ENCODE measurements at regions of chr11 and their contacts with region 1.

Region 1: GRCh38 chr11:123122341-123122740 is 60.4 kb upstream of the HSPA8 start:
- DNase-seq: no peak
- ATAC-seq: no peak
- H3K4me3 ChIP-seq: no peak overlapping the region
- H3K27ac ChIP-seq: no peak overlapping the region
- H3K4me1 ChIP-seq: peaks cover 15% of the 10 kb centered on the region
- H3K27me3 ChIP-seq: no peaks in the 10 kb centered on the region
- CTCF ChIP-seq: no peak

Region 2: GRCh38 chr11:122853971-122854446 is 268.3 kb before region 1 on chr11:
- CTCF ChIA-PET with region 1: no interaction called
- POLR2A ChIA-PET with region 1: no interaction called
- intact Hi-C with region 1: no loop called
- DNase-seq: peak; percentile 96
- ATAC-seq: 0 out of 2 replicates have a peak, but pooled peaks have one; percentile 8
- H3K4me3 ChIP-seq: no peak overlapping the region
- H3K27ac ChIP-seq: peak overlapping the region; percentile 96; the same call in 1 of the 2 replicates
- H3K4me1 ChIP-seq: peaks cover 44% of the 10 kb centered on the region
- H3K27me3 ChIP-seq: no peaks in the 10 kb centered on the region
- CTCF ChIP-seq: peak; percentile 92

Region 3: GRCh38 chr11:122976734-122977469 is 145.4 kb before region 1 on chr11:
- CTCF ChIA-PET with region 1: no interaction called
- POLR2A ChIA-PET with region 1: no interaction called
- intact Hi-C with region 1: no loop called
- DNase-seq: no peak
- ATAC-seq: no peak
- H3K4me3 ChIP-seq: no peak overlapping the region
- H3K27ac ChIP-seq: no peak overlapping the region
- H3K4me1 ChIP-seq: no peaks in the 10 kb centered on the region
- H3K27me3 ChIP-seq: peaks cover 94% of the 10 kb centered on the region
- CTCF ChIP-seq: no peak

Region 4: GRCh38 chr11:123083623-123084029 is 38.7 kb before region 1 on chr11:
- CTCF ChIA-PET with region 1: no interaction called
- POLR2A ChIA-PET with region 1: no interaction called
- intact Hi-C with region 1: loop called (anchors 1 kb)
- DNase-seq: peak; percentile 100
- ATAC-seq: peak; percentile 96
- H3K4me3 ChIP-seq: no peak overlapping the region
- H3K27ac ChIP-seq: peak overlapping the region; percentile 75
- H3K4me1 ChIP-seq: peaks cover 18% of the 10 kb centered on the region
- H3K27me3 ChIP-seq: no peaks in the 10 kb centered on the region
- CTCF ChIP-seq: no peak

Region 5: DNA sequence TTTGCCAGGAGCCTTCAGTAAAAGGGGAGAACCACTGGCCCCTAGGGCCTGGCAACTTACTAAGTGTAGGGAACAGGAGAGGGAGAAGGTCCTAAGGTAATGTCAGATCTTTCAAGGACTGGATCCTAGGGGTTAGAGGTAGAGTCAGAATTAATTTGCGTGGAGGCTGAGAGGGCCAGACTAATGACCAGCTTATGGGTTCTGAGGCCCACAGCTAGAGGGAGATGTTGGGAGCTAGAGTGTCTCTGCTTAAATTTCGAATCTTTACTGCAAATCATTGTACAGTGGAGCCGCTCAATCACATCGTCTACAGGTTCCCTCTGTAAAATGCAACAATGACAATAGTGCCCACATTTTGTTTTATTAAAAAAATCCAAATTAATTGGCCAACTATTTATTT is 41.3 kb after region 1 on chr11:
- CTCF ChIA-PET with region 1: no interaction called
- POLR2A ChIA-PET with region 1: no interaction called
- intact Hi-C with region 1: no loop called
- DNase-seq: no peak
- ATAC-seq: no peak
- H3K4me3 ChIP-seq: no peak overlapping the region
- H3K27ac ChIP-seq: no peak overlapping the region
- H3K4me1 ChIP-seq: peaks cover 21% of the 10 kb centered on the region
- H3K27me3 ChIP-seq: no peaks in the 10 kb centered on the region
- CTCF ChIP-seq: peak; percentile 43; the same call in 1 of the 2 replicates

Region 6: GRCh38 chr11:123174196-123175183 is 52.1 kb after region 1 on chr11:
- CTCF ChIA-PET with region 1: no interaction called
- POLR2A ChIA-PET with region 1: no interaction called
- intact Hi-C with region 1: loop called (anchors 1 kb)
- DNase-seq: peak; percentile 97
- ATAC-seq: peak; percentile 50
- H3K4me3 ChIP-seq: no peak overlapping the region
- H3K27ac ChIP-seq: peak overlapping the region; percentile 81
- H3K4me1 ChIP-seq: peaks cover 49% of the 10 kb centered on the region
- H3K27me3 ChIP-seq: no peaks in the 10 kb centered on the region
- CTCF ChIP-seq: no peak

Region 7: GRCh38 chr11:123195188-123196059 is 73.1 kb after region 1 on chr11 and contains the start of gene CLMP:
- CTCF ChIA-PET with region 1: no interaction called
- POLR2A ChIA-PET with region 1: no interaction called
- intact Hi-C with region 1: loop called (anchors 1 kb)
- DNase-seq: peak; percentile 62
- ATAC-seq: peak; percentile 59
- H3K4me3 ChIP-seq: peak within 1 kb of the TSS; percentile 78
- H3K27ac ChIP-seq: peak within 1 kb of the TSS; percentile 23
- H3K4me1 ChIP-seq: peaks cover 44% of the 10 kb centered on the region
- H3K27me3 ChIP-seq: no peaks in the 10 kb centered on the region
- CTCF ChIP-seq: no peak
- total RNA-seq, gene CLMP: 30.4 and 33.0 TPM in 2 replicates